ENCODE measurements at regions of chr2 and their contacts with region 1.

Region 1: DNA sequence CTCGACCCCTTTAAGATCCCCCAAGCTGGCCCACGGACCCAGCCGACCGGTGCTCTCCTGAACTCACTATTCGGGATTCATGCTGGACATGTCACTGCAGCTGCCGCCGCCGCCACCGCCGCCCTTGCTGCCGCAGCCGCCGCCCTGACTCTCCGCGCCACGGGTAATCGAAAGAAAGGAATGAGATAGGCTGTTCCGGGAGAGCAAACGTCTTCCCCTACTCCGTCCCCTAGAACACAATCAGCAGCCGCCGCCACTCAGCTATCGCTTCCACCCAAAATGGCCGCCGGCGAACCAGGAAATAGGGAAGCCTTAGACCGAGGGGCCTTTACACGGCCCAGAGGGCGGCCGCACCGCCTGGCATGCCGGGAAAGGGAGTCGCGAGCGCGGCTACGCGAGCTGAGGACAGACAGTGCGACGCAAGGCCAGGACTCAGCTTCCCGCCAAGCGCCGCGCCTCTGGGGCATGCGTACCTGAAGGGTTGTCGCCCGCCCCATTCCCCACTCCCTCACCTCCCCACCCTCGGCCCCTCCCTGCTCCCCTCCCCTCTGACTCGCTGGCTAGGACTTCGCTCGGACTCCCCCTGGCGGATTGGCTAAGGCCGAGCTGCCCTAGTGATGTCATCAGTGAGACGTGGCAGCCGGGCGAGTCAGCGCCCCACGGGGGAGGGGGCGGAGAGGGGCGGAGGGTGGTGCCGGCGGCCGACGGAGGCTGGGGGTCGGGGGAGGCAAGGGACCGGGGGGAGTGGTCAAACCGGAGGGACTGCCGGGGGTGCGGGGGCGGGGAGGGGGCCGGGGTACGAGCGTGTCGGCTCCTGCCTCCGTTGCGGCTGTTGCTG is at the start of gene RAB1A:
- H3K4me3 Mint-ChIP-seq: peak within 1 kb of the TSS; percentile 95
- H3K27ac Mint-ChIP-seq: peak within 1 kb of the TSS; percentile 99
- H3K4me1 Mint-ChIP-seq: peaks cover 34% of the 10 kb centered on the region
- H3K27me3 Mint-ChIP-seq: no peaks in the 10 kb centered on the region

Region 2: GRCh38 chr2:65056215-65057053 is 73.6 kb before region 1 on chr2 and contains the start of gene CEP68:
- intact Hi-C with region 1: loop called (anchors 2 kb)
- H3K4me3 Mint-ChIP-seq: peak within 1 kb of the TSS; percentile 96
- H3K27ac Mint-ChIP-seq: peak within 1 kb of the TSS; percentile 94
- H3K4me1 Mint-ChIP-seq: peaks cover 62% of the 10 kb centered on the region
- H3K27me3 Mint-ChIP-seq: no peaks in the 10 kb centered on the region

Region 3: GRCh38 chr2:65164426-65164891 is 34.4 kb after region 1 on chr2:
- intact Hi-C with region 1: loop called (anchors 5 kb)
- H3K4me3 Mint-ChIP-seq: no peak overlapping the region
- H3K27ac Mint-ChIP-seq: peak overlapping the region; percentile 87
- H3K4me1 Mint-ChIP-seq: peaks cover 40% of the 10 kb centered on the region
- H3K27me3 Mint-ChIP-seq: no peaks in the 10 kb centered on the region

Region 4: DNA sequence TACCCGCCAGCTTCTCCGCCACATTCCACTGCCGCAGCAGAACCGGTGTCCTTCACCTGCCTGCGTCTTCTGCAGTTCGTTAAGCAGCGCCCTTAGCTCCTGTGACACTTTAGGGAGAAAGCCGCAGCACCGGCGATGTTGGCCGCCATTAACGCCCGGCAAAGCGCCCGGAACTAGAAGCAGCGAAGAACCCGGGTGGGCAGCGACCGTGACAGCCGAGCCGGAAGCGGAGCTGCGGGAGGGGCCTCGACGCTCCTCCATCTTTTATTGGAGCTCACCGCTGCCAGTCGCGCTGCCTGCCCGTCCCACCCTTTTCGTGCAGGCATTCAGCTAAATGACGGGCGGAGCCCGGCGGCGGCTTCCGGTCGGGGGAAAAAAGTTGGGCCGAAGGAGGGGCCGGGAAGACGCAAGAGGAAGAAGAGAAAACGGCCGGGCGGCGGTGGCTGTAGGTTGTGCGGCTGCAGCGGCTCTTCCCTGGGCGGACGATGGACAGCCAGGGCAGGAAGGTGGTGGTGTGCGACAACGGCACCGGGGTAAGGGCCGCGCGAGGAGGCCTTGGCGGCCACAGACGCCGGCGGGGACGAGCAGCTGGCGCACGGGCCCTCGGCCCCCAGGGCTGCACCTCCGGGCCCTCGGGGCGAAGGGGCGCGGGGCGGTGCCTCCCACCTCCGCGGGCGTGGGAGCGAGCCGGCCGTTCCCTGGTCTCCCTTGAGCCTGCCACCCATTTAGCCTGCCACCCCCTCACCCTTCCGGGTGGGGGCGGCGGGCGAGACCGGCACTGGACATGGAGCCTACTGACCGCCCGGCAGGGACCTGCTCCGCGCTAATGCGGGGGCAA is 97.6 kb after region 1 on chr2 and contains the start of gene ACTR2:
- intact Hi-C with region 1: loop called (anchors 2 kb)
- H3K4me3 Mint-ChIP-seq: peak within 1 kb of the TSS; percentile 99
- H3K27ac Mint-ChIP-seq: peak within 1 kb of the TSS; percentile 99
- H3K4me1 Mint-ChIP-seq: peaks cover 16% of the 10 kb centered on the region
- H3K27me3 Mint-ChIP-seq: no peaks in the 10 kb centered on the region

Region 5: DNA sequence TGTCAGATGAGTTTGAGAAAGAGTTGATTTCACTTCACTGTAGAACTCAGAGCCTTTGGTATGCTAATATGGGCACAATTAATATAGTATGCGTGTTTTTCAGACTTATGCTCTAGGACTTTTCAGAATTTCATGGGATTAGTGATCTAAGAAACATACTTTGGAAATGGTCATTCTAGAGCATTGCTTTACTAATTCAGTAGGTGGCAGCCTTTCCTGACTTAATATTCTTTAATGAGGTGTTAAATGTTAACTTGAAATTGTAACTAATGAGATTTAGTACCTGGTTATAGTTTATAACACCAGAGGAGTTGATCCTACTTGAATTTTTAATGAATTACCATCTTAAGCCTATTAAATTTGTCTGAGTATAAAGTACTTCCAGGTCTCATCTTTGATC is 126.0 kb after region 1 on chr2:
- intact Hi-C with region 1: no loop called
- H3K4me3 Mint-ChIP-seq: no peak overlapping the region
- H3K27ac Mint-ChIP-seq: no peak overlapping the region
- H3K4me1 Mint-ChIP-seq: peaks cover 14% of the 10 kb centered on the region
- H3K27me3 Mint-ChIP-seq: no peaks in the 10 kb centered on the region

Measured in dendritic cell treated with granulocyte-macrophage colony-stimulating factor and Interleukin-4, amounts not matched to agents 40 ng/mL and 50 ng/mL, for 4 days (primary cell).